ENCODE measurements at regions of chr3 and their contacts with region 1.

Region 1: GRCh38 chr3:119676771-119677640 is at the start of gene COX17:
- DNase-seq: peak; percentile 91 to 96
- ATAC-seq: peak; percentile 86 to 94 (median 91)
- H3K4me3 ChIP-seq: peak within 1 kb of the TSS; percentile 53 to 81 (median 70)
- H3K27ac ChIP-seq: peak within 1 kb of the TSS; percentile 89 to 98 (median 96)
- H3K4me1 ChIP-seq: peaks cover 6 to 45% (median 34%) of the 10 kb centered on the region in 9 donors
- H3K27me3 ChIP-seq: no peaks in the 10 kb centered on the region
- CTCF ChIP-seq: no peak
- total RNA-seq, gene COX17: 76.2 to 175 (median 107) TPM

Region 2: GRCh38 chr3:118884748-118885206 is 792.2 kb before region 1 on chr3:
- intact Hi-C with region 1: loop called in 3 of 10 experiments (anchors 5 to 10 kb)
- DNase-seq: peak; percentile 56 to 75
- ATAC-seq: peak; percentile 67 to 87 (median 83)
- H3K4me3 ChIP-seq: no peak overlapping the region
- H3K27ac ChIP-seq: no peak overlapping the region
- H3K4me1 ChIP-seq: no peaks in the 10 kb centered on the region
- H3K27me3 ChIP-seq: peaks cover 0 to 36% (median 14%) of the 10 kb centered on the region in 7 donors
- CTCF ChIP-seq: peak; percentile 54 to 94 (median 85)

Region 3: GRCh38 chr3:119259425-119260350 is 417.3 kb before region 1 on chr3:
- intact Hi-C with region 1: loop called in 1 of 10 experiments (anchors 10 kb)
- DNase-seq: no peak
- ATAC-seq: no peak
- H3K4me3 ChIP-seq: no peak overlapping the region
- H3K27ac ChIP-seq: no peak overlapping the region
- H3K4me1 ChIP-seq: peaks cover 0 to 17% (median 6%) of the 10 kb centered on the region in 9 donors
- H3K27me3 ChIP-seq: no peaks in the 10 kb centered on the region
- CTCF ChIP-seq: no peak

Region 4: DNA sequence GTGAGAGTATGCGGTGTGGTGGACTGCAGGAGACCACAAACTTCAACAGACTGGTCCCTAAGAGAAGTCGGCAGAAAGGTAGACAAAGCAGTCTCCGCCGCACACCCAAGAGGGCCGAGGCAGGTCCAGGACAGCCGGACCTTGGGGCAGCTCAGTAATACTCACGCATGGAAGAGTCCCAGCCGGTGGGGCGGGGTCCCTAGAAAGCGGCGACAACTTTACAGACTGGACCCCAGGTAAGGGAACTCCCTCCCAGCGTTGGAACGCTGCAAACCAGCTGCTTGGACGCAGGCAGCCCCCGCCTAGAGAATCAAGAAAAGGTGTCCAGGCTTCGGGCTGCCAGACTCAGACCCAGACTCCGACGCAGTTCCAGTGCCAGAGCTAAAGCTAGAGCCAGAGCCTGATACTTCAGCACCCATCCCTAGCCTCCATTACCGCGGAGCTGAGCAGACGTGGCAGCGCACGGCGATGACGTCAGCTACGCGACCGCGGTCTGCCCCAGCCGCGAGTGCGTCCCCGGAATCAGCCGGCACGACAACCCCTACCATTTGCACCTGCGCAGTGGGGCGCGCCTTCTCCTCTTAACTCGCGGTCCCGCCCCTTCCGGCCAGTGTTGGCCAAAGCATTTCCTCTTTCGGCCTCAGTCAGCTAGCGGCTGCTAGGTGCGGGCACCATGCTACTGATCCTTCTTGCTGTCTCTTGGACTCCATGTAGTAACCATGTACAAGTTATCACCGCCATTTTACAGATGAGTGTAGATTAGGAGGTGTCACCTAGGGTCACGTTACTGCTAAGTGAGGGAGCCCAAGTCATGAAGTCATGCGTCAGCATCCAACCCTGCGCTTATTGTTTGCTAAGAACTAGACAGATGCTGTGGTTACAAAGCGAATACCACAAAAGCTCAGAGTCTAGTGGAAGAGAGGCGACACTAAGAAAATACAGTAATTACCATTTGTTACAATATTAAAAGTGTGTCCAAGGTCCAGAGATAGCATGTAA is 213.5 kb before region 1 on chr3 and contains the start of gene TMEM39A:
- intact Hi-C with region 1: loop called in 1 of 10 experiments (anchors 10 kb)
- DNase-seq: peak; percentile 100
- ATAC-seq: peak; percentile 97 to 99 (median 99)
- H3K4me3 ChIP-seq: peak within 1 kb of the TSS; percentile 63 to 94 (median 78)
- H3K27ac ChIP-seq: peak within 1 kb of the TSS; percentile 53 to 93 (median 80)
- H3K4me1 ChIP-seq: peaks cover 0 to 56% (median 26%) of the 10 kb centered on the region in 9 donors
- H3K27me3 ChIP-seq: no peaks in the 10 kb centered on the region
- CTCF ChIP-seq: peak in 4 of 9 donors; percentile 5 to 34 (median 18)
- total RNA-seq, gene TMEM39A: 9.7 to 25.8 (median 13.5) TPM

Region 5: DNA sequence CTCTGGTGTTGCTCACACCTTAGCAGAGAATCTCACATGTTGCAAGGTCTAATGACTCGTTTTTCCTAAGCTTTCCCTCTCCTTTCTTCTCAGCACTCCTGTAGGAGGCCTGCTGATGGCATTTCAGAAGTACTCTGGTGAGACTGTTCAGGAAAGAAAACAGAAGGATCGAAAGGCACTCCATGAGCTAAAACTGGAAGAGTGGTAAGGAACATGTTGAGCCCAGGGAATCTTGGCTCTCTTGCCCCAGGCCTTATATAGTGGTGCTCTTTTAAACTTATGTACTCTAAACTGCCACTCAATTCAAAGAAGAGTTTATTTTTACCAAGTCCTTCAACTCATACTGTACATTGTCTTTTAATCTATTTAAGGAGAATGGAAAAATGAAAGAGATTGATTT is 159.9 kb before region 1 on chr3:
- intact Hi-C with region 1: loop called in 7 of 10 experiments (anchors 5 to 10 kb)
- DNase-seq: peak in 1 of 2 donors; percentile 25
- ATAC-seq: peak; percentile 68 to 98 (median 94)
- H3K4me3 ChIP-seq: no peak overlapping the region
- H3K27ac ChIP-seq: peak overlapping the region; percentile 19 to 84 (median 74)
- H3K4me1 ChIP-seq: peaks cover 0 to 10% (median 3%) of the 10 kb centered on the region in 9 donors
- H3K27me3 ChIP-seq: no peaks in the 10 kb centered on the region
- CTCF ChIP-seq: no peak

Region 6: DNA sequence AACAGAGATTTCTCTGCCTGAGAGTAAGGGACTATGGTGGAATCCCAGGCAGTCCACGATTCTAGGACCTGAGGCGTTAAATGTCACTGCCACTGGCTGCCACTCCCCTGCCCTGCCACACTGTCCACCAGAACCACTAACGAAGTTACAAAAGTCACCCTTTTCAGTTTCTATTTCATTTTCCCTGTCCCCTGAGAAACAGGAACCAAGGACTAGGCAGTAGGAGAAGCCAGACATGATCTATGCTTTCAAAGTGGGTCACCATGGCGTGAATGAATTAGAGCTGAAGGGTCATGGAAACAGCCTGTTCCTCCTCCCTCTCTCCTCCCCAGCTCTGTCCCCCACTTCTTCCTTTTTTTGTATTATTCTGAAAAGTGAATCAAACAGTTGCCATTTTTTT is 106.8 kb before region 1 on chr3:
- intact Hi-C with region 1: loop called in 3 of 10 experiments (anchors 2 to 5 kb)
- DNase-seq: no peak
- ATAC-seq: peak in 7 of 8 donors; percentile 52 to 87 (median 59)
- H3K4me3 ChIP-seq: no peak overlapping the region
- H3K27ac ChIP-seq: peak overlapping the region in 7 of 10 donors; percentile 14 to 88 (median 65)
- H3K4me1 ChIP-seq: peaks cover 0 to 30% (median 11%) of the 10 kb centered on the region in 9 donors
- H3K27me3 ChIP-seq: no peaks in the 10 kb centered on the region
- CTCF ChIP-seq: no peak

Region 7: DNA sequence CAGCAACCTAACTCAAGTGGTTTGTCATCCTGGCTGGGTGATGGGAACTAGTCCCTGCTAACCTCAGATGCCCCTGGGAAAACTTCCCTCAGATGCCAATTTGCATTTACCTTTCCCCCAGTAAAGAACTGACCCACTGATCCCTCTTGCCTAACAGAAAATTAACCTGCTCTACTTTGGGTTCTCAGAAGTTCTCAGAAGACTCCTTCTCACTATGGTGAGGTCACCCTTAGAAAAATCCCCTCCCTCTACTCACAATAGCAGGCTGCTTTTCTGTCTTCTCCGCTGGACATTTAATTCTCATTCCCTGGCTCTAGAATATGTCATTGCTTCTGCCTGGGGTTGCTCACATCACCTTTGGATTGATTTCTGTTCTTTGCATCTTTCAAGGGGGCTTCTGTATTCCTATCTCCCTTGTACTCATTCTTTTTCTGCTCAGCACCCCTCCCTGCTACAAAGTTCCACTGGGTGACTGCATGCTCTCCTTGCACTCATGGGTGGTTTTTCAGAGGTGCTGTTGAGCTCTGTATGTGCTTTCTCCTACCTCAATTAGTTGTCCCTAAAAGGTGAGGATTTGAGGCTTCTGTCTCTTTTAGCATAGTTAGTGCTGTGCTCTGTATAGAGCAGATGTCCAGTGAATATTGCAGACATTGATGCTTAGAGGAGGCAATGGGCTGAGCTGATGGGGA is 78.5 kb before region 1 on chr3:
- intact Hi-C with region 1: loop called in 4 of 10 experiments (anchors 5 to 10 kb)
- DNase-seq: no peak
- ATAC-seq: no peak
- H3K4me3 ChIP-seq: no peak overlapping the region
- H3K27ac ChIP-seq: peak overlapping the region in 9 of 10 donors; percentile 65 to 90 (median 77)
- H3K4me1 ChIP-seq: peaks cover 6 to 77% (median 56%) of the 10 kb centered on the region in 9 donors
- H3K27me3 ChIP-seq: no peaks in the 10 kb centered on the region
- CTCF ChIP-seq: no peak

Region 8: GRCh38 chr3:119618905-119619493 is 58.0 kb before region 1 on chr3:
- intact Hi-C with region 1: no loop called
- DNase-seq: no peak
- ATAC-seq: peak in 4 of 8 donors; percentile 20 to 35 (median 28)
- H3K4me3 ChIP-seq: no peak overlapping the region
- H3K27ac ChIP-seq: no peak overlapping the region
- H3K4me1 ChIP-seq: peaks cover 0 to 6% (median 0%) of the 10 kb centered on the region in 9 donors
- H3K27me3 ChIP-seq: no peaks in the 10 kb centered on the region
- CTCF ChIP-seq: no peak

Measured in heart right ventricle (tissue), 16 donors.